Breast epithelium (tissue), 4 donors: ENCODE measurements at regions of chr18 and their contacts with region 1.

Region 1: DNA sequence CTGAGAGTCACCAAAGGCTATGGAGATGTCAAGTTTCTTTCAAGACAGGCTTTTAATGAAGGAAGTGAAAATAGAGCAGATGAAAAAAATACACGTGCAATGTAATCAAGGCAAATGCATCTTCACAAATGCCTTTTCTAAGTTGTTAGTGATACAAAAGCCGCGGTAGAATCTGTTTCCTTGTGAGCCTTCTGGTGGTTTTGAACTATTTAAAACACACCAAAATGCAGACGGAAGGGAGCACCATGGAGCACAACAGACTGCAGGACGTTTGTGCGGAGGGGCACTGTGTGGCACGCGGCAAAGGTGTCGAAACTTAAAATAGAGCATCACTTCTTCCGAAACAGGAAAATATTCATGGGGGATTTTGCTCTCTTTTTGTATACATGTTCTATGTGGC is 65.0 kb upstream of the BOD1L2 start:
- DNase-seq: no peak
- H3K4me3 ChIP-seq: no peak overlapping the region
- H3K27ac ChIP-seq: no peak overlapping the region
- H3K4me1 ChIP-seq: no peaks in the 10 kb centered on the region
- H3K27me3 ChIP-seq: peaks cover 0 to 9% of the 10 kb centered on the region in 2 donors
- CTCF ChIP-seq: no peak
- POLR2A ChIP-seq: no peak

Region 2: GRCh38 chr18:57051657-57052044 is 30.2 kb before region 1 on chr18:
- intact Hi-C with region 1: no loop called
- DNase-seq: no peak
- H3K4me3 ChIP-seq: no peak overlapping the region
- H3K27ac ChIP-seq: no peak overlapping the region
- H3K4me1 ChIP-seq: no peaks in the 10 kb centered on the region
- H3K27me3 ChIP-seq: no peaks in the 10 kb centered on the region
- CTCF ChIP-seq: no peak
- POLR2A ChIP-seq: no peak

Region 3: DNA sequence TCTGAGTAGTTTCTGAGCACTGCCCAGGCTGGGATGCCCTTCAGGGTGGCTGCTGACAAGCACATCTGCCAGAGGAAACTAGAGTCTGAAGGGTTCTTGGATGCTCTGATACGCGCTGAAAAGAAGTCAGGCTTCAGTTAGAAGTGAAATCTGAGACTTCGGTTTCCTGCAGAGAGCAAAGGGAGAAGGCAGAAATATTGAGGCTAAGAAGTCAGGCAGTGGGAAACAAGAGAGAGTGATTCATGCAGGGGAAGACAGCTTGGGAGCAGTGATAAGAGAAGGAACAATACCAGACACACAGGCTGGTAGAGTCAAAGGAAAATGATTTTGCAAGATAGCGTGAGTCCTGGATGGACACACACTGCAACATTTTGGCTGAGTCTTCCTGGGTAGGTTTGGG is 14.0 kb after region 1 on chr18:
- intact Hi-C with region 1: loop called (anchors 1 kb)
- DNase-seq: no peak
- H3K4me3 ChIP-seq: no peak overlapping the region
- H3K27ac ChIP-seq: no peak overlapping the region
- H3K4me1 ChIP-seq: no peaks in the 10 kb centered on the region
- H3K27me3 ChIP-seq: no peaks in the 10 kb centered on the region
- CTCF ChIP-seq: no peak
- POLR2A ChIP-seq: no peak